ENCODE measurements at regions of chr5 and their contacts with region 1.

Region 1: GRCh38 chr5:172379481-172379880 is 74.8 kb downstream of the SH3PXD2B start:
- DNase-seq: no peak
- ATAC-seq: no peak
- H3K4me3 Mint-ChIP-seq: no peak overlapping the region
- H3K27ac Mint-ChIP-seq: no peak overlapping the region
- H3K4me1 Mint-ChIP-seq: no peaks in the 10 kb centered on the region
- H3K27me3 Mint-ChIP-seq: peaks cover 3% of the 10 kb centered on the region

Region 2: GRCh38 chr5:171750311-171750788 is 629.1 kb before region 1 on chr5:
- CTCF ChIA-PET with region 1: no interaction called
- POLR2A ChIA-PET with region 1: interaction called, 11 read pairs
- intact Hi-C with region 1: no loop called
- DNase-seq: peak; percentile 25
- ATAC-seq: no peak
- H3K4me3 Mint-ChIP-seq: no peak overlapping the region
- H3K27ac Mint-ChIP-seq: no peak overlapping the region
- H3K4me1 Mint-ChIP-seq: no peaks in the 10 kb centered on the region
- H3K27me3 Mint-ChIP-seq: peaks cover 2% of the 10 kb centered on the region

Measured in activated CD4-positive, alpha-beta T cell treated with anti-CD3 and anti-CD28 coated beads for 36 hours (primary cell).